Stomach (tissue), 19 donors: ENCODE measurements at regions of chr1 and their contacts with region 1.

Region 1: GRCh38 chr1:67760030-67760821 is 73.0 kb downstream of the GNG12 start:
- DNase-seq: peak; percentile 76 to 94
- H3K4me3 ChIP-seq: no peak overlapping the region
- H3K27ac ChIP-seq: peak overlapping the region; percentile 79 to 83 (median 82)
- H3K4me1 ChIP-seq: peaks cover 14 to 59% (median 36%) of the 10 kb centered on the region in 4 donors
- H3K27me3 ChIP-seq: no peaks in the 10 kb centered on the region
- CTCF ChIP-seq: peak in 5 of 7 experiments; percentile 75 to 90 (median 86)
- EP300 ChIP-seq: no peak
- POLR2A ChIP-seq: no peak

Region 2: DNA sequence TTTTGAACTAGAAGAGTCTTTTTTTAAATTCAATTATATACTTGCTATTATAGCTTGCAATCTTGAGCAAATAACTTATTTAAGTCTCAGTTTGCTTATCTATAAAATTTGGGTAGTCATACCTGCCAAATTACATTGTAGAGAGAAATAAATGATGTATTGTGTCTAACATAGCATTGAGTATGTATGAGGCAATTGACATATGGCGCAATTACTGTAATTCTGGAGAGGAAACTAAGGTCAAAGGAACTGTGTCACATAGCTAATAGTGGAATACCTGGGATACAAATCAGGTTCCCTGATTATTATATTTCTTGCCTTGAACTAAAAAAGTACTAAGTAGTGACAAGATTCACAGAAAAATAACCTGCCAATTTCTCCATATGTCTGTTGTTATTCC is 1665.0 kb before region 1 on chr1:
- intact Hi-C with region 1: no loop called
- DNase-seq: no peak
- H3K4me3 ChIP-seq: no peak overlapping the region
- H3K27ac ChIP-seq: no peak overlapping the region
- H3K4me1 ChIP-seq: no peaks in the 10 kb centered on the region
- H3K27me3 ChIP-seq: no peaks in the 10 kb centered on the region
- CTCF ChIP-seq: no peak
- EP300 ChIP-seq: no peak
- POLR2A ChIP-seq: no peak

Region 3: GRCh38 chr1:67535474-67535873 is 224.8 kb before region 1 on chr1:
- intact Hi-C with region 1: loop called (anchors 10 kb)
- DNase-seq: peak; percentile 85 to 93
- H3K4me3 ChIP-seq: no peak overlapping the region
- H3K27ac ChIP-seq: peak overlapping the region in 4 of 5 donors; percentile 30 to 75 (median 62)
- H3K4me1 ChIP-seq: peaks cover 0 to 30% (median 18%) of the 10 kb centered on the region in 4 donors
- H3K27me3 ChIP-seq: no peaks in the 10 kb centered on the region
- CTCF ChIP-seq: peak in 5 of 7 experiments; percentile 79 to 92 (median 88)
- EP300 ChIP-seq: no peak
- POLR2A ChIP-seq: no peak

Region 4: DNA sequence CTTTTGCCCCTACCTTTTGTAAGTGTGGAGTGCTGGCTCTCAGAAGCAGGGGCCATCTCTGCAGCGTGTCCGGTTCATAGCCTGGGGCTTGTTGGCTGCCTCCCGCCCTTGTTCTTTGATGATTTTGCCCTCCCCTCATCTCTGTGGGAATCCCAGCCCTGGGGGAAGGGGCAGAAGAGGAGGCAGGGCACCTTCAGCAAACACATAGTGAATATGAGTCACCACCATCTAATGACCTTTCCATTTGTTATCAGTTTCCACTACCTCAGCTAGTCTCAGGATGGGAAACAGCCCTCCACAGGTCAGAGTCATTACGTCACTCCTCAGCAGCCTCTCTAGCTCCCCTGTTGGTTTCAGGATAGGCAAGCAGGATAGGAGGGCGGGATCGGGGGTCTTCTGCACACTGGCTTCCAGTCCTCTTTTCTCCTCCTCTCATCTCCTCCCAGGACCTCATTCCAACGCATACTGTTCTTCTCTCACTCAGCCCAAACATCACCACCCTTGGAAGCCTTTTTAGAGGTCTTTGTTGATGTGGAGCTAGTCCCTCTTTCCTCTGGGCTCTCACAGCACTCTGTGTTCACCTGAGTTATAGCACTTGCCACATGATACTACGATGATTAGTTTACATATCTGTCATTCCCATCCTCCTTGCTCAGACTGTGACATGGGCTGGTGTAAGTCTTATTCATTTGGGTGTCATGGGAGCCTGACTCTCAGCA is 59.4 kb before region 1 on chr1:
- intact Hi-C with region 1: no loop called
- DNase-seq: peak in 1 of 2 donors; percentile 71
- H3K4me3 ChIP-seq: no peak overlapping the region
- H3K27ac ChIP-seq: no peak overlapping the region
- H3K4me1 ChIP-seq: peaks cover 0 to 5% (median 0%) of the 10 kb centered on the region in 4 donors
- H3K27me3 ChIP-seq: no peaks in the 10 kb centered on the region
- CTCF ChIP-seq: no peak
- EP300 ChIP-seq: no peak
- POLR2A ChIP-seq: no peak